ENCODE measurements at regions of chr16 and their contacts with region 1.

Region 1: GRCh38 chr16:72124761-72125634 is 31.4 kb downstream of the DHX38 start:
- DNase-seq: peak; percentile 26
- ATAC-seq: peak; percentile 95
- H3K4me3 ChIP-seq: no peak overlapping the region
- H3K27ac ChIP-seq: no peak overlapping the region
- H3K4me1 ChIP-seq: no peaks in the 10 kb centered on the region; the same call in 1 of the 2 replicates
- H3K27me3 ChIP-seq: no peaks in the 10 kb centered on the region
- CTCF ChIP-seq: peak; percentile 76 to 92 (median 82); a peak in 5 of 6 replicates
- EP300 ChIP-seq: no peak
- POLR2A ChIP-seq: no peak
- RAD21 ChIP-seq: peak; percentile 93

Region 2: GRCh38 chr16:72142476-72142875 is 17.5 kb after region 1 on chr16:
- CTCF ChIA-PET with region 1: interaction called, 12 read pairs
- POLR2A ChIA-PET with region 1: no interaction called
- RAD21 ChIA-PET with region 1: no interaction called
- SMC1A ChIA-PET with region 1: interaction called, 5 read pairs
- in situ Hi-C with region 1: no loop called
- intact Hi-C with region 1: no loop called
- DNase-seq: no peak
- ATAC-seq: no peak
- H3K4me3 ChIP-seq: no peak overlapping the region
- H3K27ac ChIP-seq: no peak overlapping the region
- H3K4me1 ChIP-seq: no peaks in the 10 kb centered on the region
- H3K27me3 ChIP-seq: no peaks in the 10 kb centered on the region
- CTCF ChIP-seq: no peak
- EP300 ChIP-seq: no peak
- POLR2A ChIP-seq: no peak
- RAD21 ChIP-seq: no peak

Region 3: GRCh38 chr16:72241930-72242329 is 116.9 kb after region 1 on chr16:
- CTCF ChIA-PET with region 1: interaction called, 9 read pairs
- POLR2A ChIA-PET with region 1: no interaction called
- RAD21 ChIA-PET with region 1: interaction called, 4 read pairs
- SMC1A ChIA-PET with region 1: no interaction called
- in situ Hi-C with region 1: no loop called
- intact Hi-C with region 1: loop called (anchors 10 kb)
- DNase-seq: no peak
- ATAC-seq: peak; percentile 65
- H3K4me3 ChIP-seq: no peak overlapping the region
- H3K27ac ChIP-seq: no peak overlapping the region
- H3K4me1 ChIP-seq: peaks cover 7% of the 10 kb centered on the region
- H3K27me3 ChIP-seq: no peaks in the 10 kb centered on the region
- CTCF ChIP-seq: peak; percentile 36 to 54 (median 41); a peak in 5 of 6 replicates
- EP300 ChIP-seq: no peak
- POLR2A ChIP-seq: no peak
- RAD21 ChIP-seq: peak; percentile 57

Region 4: GRCh38 chr16:72467157-72467759 is 342.3 kb after region 1 on chr16:
- CTCF ChIA-PET with region 1: interaction called, 92 read pairs
- POLR2A ChIA-PET with region 1: no interaction called
- RAD21 ChIA-PET with region 1: interaction called, 24 read pairs
- SMC1A ChIA-PET with region 1: interaction called, 38 read pairs
- in situ Hi-C with region 1: loop called (anchors 5 kb)
- intact Hi-C with region 1: loop called (anchors 1 kb)
- DNase-seq: no peak
- ATAC-seq: peak; percentile 84
- H3K4me3 ChIP-seq: no peak overlapping the region
- H3K27ac ChIP-seq: no peak overlapping the region
- H3K4me1 ChIP-seq: no peaks in the 10 kb centered on the region
- H3K27me3 ChIP-seq: no peaks in the 10 kb centered on the region
- CTCF ChIP-seq: peak; percentile 49 to 67 (median 58); a peak in 5 of 6 replicates
- EP300 ChIP-seq: no peak
- POLR2A ChIP-seq: no peak
- RAD21 ChIP-seq: peak; percentile 79

Region 5: GRCh38 chr16:72501739-72502593 is 377.0 kb after region 1 on chr16:
- CTCF ChIA-PET with region 1: interaction called, 10 read pairs
- POLR2A ChIA-PET with region 1: no interaction called
- RAD21 ChIA-PET with region 1: no interaction called
- SMC1A ChIA-PET with region 1: interaction called, 6 read pairs
- in situ Hi-C with region 1: no loop called
- intact Hi-C with region 1: no loop called
- DNase-seq: peak; percentile 42
- ATAC-seq: peak; percentile 98
- H3K4me3 ChIP-seq: no peak overlapping the region
- H3K27ac ChIP-seq: no peak overlapping the region
- H3K4me1 ChIP-seq: no peaks in the 10 kb centered on the region
- H3K27me3 ChIP-seq: no peaks in the 10 kb centered on the region
- CTCF ChIP-seq: peak; percentile 82 to 93 (median 86)
- EP300 ChIP-seq: no peak
- POLR2A ChIP-seq: no peak
- RAD21 ChIP-seq: peak; percentile 99

Region 6: DNA sequence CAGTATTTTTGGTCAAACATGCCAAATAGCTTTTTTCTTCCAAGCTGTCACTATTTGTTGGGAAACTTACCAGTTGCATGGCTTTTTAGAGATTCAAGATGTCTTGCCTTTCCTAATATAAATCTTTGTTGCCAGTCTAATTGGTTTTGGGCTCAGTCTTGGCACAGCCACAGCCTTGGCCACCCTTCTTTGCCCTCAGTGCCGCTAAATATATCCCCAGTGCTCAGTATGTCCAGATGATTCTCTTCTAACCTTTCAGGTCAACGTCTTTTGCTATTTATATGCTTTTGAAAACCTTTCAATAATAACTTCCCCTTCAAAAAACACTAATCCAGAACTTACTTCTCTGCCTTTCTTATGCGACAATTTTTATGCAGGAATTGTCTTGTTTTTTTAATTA is 1406.0 kb after region 1 on chr16:
- CTCF ChIA-PET with region 1: no interaction called
- POLR2A ChIA-PET with region 1: no interaction called
- RAD21 ChIA-PET with region 1: no interaction called
- SMC1A ChIA-PET with region 1: no interaction called
- in situ Hi-C with region 1: no loop called
- intact Hi-C with region 1: loop called (anchors 5 kb)
- DNase-seq: no peak
- ATAC-seq: no peak
- H3K4me3 ChIP-seq: no peak overlapping the region
- H3K27ac ChIP-seq: no peak overlapping the region
- H3K4me1 ChIP-seq: no peaks in the 10 kb centered on the region
- H3K27me3 ChIP-seq: no peaks in the 10 kb centered on the region
- CTCF ChIP-seq: no peak
- EP300 ChIP-seq: no peak
- POLR2A ChIP-seq: no peak
- RAD21 ChIP-seq: no peak

Measured in GM12878 (cell line).